ENCODE measurements at regions of chr4 and their contacts with region 1.

Region 1: GRCh38 chr4:15479089-15479912 is 9.6 kb downstream of the CC2D2A start:
- DNase-seq: peak in 5 of 6 donors; percentile 21 to 54 (median 38)
- ATAC-seq: peak; percentile 91 to 96 (median 96)
- H3K4me3 ChIP-seq: peak overlapping the region; percentile 1 to 49 (median 24)
- H3K27ac ChIP-seq: peak overlapping the region in 2 of 4 donors; percentile 39 to 47
- H3K4me1 ChIP-seq: no peaks in the 10 kb centered on the region
- H3K27me3 ChIP-seq: no peaks in the 10 kb centered on the region
- CTCF ChIP-seq: peak; percentile 31 to 56 (median 38)

Region 2: GRCh38 chr4:14749910-14750309 is 729.4 kb before region 1 on chr4:
- intact Hi-C with region 1: no loop called
- DNase-seq: peak in 4 of 6 donors; percentile 17 to 34 (median 18)
- ATAC-seq: peak in 3 of 4 donors; percentile 76 to 92 (median 91)
- H3K4me3 ChIP-seq: no peak overlapping the region
- H3K27ac ChIP-seq: no peak overlapping the region
- H3K4me1 ChIP-seq: no peaks in the 10 kb centered on the region
- H3K27me3 ChIP-seq: no peaks in the 10 kb centered on the region
- CTCF ChIP-seq: peak in 2 of 4 donors; percentile 18 to 29

Region 3: DNA sequence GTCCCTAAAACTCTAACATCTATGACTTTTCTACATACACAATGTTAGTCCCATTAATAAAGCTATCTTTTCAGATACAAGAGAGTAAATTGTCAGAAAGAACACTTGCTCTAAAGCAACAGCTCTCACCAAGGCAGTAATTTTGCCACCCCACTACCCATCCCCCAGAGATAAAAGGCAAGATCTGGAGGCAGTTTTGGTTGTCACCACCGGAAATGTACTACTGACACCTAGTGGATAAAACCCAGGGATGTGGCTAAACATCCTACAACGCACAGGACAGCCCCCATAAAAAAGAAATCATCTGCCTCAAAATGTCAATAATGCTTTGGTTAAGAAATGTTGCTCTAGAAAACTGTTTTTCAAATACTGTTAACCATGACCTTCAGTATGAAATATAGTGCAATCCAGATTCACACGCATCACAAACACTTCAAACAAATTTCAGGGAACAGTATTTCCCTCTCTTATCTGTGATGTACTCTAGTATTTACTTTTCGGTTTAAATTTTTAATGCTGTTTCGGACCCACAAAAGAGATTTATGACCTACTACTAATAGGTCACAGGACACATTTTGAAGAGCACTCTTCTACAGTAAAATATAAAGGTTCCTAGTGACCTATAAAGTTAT is 170.7 kb after region 1 on chr4:
- intact Hi-C with region 1: loop called in 1 of 3 experiments (anchors 5 kb)
- DNase-seq: peak in 3 of 6 donors; percentile 9 to 28 (median 25)
- ATAC-seq: peak; percentile 59 to 74 (median 68)
- H3K4me3 ChIP-seq: no peak overlapping the region
- H3K27ac ChIP-seq: no peak overlapping the region
- H3K4me1 ChIP-seq: peaks cover 24 to 44% (median 37%) of the 10 kb centered on the region in 3 donors
- H3K27me3 ChIP-seq: no peaks in the 10 kb centered on the region
- CTCF ChIP-seq: peak in 3 of 4 donors; percentile 45 to 53 (median 49)

Measured in pancreas (tissue), 10 donors.